Sciatic nerve (tissue), 2 donors: ENCODE measurements at regions of chr17 and their contacts with region 1.

Region 1: DNA sequence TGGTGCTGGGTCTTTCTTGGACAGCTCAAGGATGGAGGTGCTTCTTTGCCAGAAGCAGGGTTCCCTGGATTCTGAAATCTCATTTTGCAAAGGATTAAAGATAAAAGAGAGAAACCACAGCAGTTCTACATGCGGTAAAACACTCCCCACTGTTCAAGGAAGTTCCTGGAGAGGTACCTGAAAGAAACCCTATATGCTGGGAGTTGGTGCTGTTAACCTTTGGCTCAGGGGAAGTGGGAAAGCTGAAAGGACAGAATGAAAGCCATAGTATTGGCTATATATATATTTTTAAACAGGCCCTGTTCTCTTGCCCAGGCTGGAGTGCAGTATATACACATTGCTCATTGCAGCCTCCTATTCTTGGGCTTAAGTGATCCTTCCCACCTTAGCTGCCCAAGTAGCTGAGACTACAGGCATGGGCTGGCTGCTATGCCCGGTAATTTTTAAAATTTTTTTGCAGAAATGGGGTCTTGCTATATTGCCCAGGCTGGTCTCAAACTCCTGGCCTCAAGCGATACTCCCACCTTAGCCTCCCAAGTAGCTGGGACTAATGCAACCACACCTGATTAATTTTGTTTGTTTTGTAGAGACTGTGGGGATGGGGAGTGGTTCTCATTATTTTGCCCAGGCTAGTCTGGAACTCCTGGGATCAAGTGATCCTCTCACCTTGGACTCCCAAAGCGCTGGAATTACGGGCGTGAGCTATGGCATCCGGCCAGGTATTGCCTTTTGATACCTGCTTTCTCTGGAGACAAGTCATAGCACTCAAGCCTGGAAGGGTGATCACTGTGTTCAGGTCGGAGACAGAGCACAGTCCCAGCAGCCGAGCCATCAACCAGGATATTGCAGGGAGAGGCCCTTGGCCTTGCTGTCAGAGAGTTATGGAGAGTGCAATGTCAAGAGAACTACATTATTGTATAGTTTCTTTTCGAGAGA is 55.2 kb downstream of the MSI2 start:
- DNase-seq: no peak
- ATAC-seq: no peak

Region 2: GRCh38 chr17:56057869-56058268 is 1253.7 kb before region 1 on chr17:
- intact Hi-C with region 1: loop called (anchors 5 kb)
- DNase-seq: no peak
- ATAC-seq: no peak

Region 3: DNA sequence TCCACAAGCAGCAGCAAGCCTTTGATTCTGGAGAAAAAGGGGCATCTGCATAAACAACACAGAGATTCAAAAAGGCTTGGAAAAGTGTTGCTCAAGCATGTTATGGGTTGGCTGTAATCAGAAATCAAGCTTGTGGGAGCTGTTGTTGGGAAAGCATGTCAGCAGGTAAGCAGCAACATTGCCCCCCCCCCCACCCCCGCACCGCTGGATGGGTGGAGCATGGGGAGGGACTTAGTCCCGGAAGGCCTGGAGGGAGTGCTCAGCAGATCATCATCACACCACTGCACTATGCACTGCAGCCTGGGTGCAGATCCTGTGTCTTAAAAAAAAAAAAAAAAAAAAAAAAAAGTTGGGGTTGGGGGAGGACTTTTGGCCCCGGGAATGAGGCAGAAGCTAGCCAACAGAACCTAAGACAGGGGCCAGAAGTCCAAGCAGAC is 243.3 kb before region 1 on chr17:
- intact Hi-C with region 1: no loop called
- DNase-seq: no peak
- ATAC-seq: no peak

Region 4: DNA sequence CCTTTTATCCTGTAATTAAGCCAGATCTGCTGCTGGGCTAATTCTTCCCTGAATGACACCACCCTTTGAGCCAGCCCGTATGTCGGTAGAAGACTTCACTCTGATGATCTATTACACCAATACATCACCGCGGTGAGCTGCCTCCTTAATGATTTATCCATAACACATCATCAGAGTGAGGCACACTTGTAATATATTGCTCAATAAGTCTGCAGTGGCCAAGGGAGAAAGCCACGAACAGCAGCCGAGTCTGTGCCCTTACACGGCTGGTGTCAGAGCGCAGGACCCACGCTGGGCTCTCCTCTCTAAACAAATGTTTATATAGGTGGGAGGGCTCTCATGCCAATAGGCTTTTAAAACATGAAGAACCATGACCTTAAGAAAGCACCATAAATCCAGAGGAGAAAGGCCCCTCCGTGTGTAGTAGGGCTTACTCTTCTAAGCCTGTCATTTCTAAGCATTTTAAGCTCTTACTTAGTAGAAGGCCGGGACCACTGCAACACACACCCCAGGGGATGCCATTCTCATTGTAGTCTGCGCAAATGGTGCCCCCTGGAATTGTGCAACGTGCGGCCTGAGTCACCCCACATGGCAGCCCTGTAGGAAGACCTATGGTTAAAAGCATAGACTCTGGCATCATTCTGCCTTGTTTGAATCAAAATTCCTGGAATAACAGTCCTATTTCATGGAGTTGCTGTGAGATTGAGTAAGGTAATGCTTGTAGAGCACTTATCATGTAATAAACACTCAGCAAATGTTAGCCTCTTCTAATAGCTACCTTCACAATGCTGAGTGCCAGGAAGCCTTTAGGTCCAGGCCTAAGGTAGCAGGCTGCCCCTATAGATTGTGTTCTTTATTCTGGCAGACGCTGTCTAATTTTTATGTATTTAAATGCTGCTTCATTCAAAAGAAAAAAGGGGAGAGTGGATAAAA is 512.2 kb after region 1 on chr17:
- intact Hi-C with region 1: no loop called
- DNase-seq: no peak
- ATAC-seq: no peak